CD4-positive, alpha-beta memory T cell (primary cell): ENCODE measurements at regions of chr15 and their contacts with region 1.

Region 1: GRCh38 chr15:100341662-100342560 is at the start of gene ADAMTS17:
- DNase-seq: peak; percentile 94 to 97 (median 95)
- H3K4me3 ChIP-seq: peak within 1 kb of the TSS in 1 of 2 donors; percentile 79
- H3K4me3 Mint-ChIP-seq: peak within 1 kb of the TSS; percentile 57 to 86 (median 75)
- H3K27ac ChIP-seq: peak within 1 kb of the TSS; percentile 43
- H3K27ac Mint-ChIP-seq: peak within 1 kb of the TSS; percentile 29 to 87 (median 77)
- H3K4me1 ChIP-seq: peaks cover 22% of the 10 kb centered on the region
- H3K4me1 Mint-ChIP-seq: peaks cover 13 to 34% (median 15%) of the 10 kb centered on the region in 4 donors
- H3K27me3 ChIP-seq: no peaks in the 10 kb centered on the region
- H3K27me3 Mint-ChIP-seq: no peaks in the 10 kb centered on the region
- total RNA-seq, gene ADAMTS17: 4.7 to 6.2 TPM

Region 2: DNA sequence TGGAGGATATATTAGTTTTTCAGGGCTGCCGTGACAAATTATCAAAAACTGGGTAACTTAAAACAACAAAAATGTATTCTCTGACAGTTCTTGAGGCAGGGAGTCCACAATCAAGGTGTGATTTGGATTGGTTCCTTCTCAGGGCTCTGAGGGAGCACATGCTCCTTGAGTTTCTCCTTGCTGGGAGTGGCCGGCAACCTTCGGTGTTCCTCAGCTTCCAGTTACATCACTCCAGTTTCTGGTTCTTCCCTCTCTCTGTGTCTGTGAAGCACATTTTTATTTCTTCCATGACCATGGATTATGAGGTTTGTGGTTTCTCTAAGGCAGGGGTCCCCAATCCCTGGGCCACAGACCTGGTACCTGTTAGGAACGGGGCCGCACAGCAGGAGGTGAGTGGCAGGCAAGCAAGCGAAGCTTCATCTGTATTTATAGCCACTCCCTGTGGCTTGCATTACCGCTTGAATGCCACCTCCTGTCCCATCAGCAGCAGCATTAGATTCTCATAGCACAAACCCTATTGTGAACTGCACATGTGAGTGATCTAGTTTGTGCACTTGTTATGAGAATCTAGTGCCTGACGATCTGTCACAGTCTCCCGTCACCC is 1066.3 kb before region 1 on chr15:
- CTCF ChIA-PET with region 1: interaction called, 5 read pairs
- POLR2A ChIA-PET with region 1: no interaction called
- intact Hi-C with region 1: loop called (anchors 1 kb)
- DNase-seq: no peak
- H3K4me3 ChIP-seq: no peak overlapping the region
- H3K4me3 Mint-ChIP-seq: no peak overlapping the region
- H3K27ac ChIP-seq: no peak overlapping the region
- H3K27ac Mint-ChIP-seq: no peak overlapping the region
- H3K4me1 ChIP-seq: no peaks in the 10 kb centered on the region
- H3K4me1 Mint-ChIP-seq: peaks cover 7 to 14% (median 13%) of the 10 kb centered on the region in 4 donors
- H3K27me3 ChIP-seq: no peaks in the 10 kb centered on the region
- H3K27me3 Mint-ChIP-seq: no peaks in the 10 kb centered on the region

Region 3: GRCh38 chr15:99733268-99734039 is 608.5 kb before region 1 on chr15 and contains the start of gene LYSMD4:
- CTCF ChIA-PET with region 1: no interaction called
- POLR2A ChIA-PET with region 1: interaction called, 3 read pairs
- intact Hi-C with region 1: loop called (anchors 10 kb)
- DNase-seq: peak; percentile 95 to 97 (median 96)
- H3K4me3 ChIP-seq: peak within 1 kb of the TSS; percentile 6 to 67
- H3K4me3 Mint-ChIP-seq: peak within 1 kb of the TSS; percentile 83 to 95 (median 87)
- H3K27ac ChIP-seq: peak within 1 kb of the TSS; percentile 46
- H3K27ac Mint-ChIP-seq: peak within 1 kb of the TSS; percentile 80 to 97 (median 88)
- H3K4me1 ChIP-seq: peaks cover 14% of the 10 kb centered on the region
- H3K4me1 Mint-ChIP-seq: peaks cover 12 to 24% (median 16%) of the 10 kb centered on the region in 4 donors
- H3K27me3 ChIP-seq: no peaks in the 10 kb centered on the region
- H3K27me3 Mint-ChIP-seq: no peaks in the 10 kb centered on the region
- total RNA-seq, gene LYSMD4: 18.0 to 19.0 TPM

Region 4: DNA sequence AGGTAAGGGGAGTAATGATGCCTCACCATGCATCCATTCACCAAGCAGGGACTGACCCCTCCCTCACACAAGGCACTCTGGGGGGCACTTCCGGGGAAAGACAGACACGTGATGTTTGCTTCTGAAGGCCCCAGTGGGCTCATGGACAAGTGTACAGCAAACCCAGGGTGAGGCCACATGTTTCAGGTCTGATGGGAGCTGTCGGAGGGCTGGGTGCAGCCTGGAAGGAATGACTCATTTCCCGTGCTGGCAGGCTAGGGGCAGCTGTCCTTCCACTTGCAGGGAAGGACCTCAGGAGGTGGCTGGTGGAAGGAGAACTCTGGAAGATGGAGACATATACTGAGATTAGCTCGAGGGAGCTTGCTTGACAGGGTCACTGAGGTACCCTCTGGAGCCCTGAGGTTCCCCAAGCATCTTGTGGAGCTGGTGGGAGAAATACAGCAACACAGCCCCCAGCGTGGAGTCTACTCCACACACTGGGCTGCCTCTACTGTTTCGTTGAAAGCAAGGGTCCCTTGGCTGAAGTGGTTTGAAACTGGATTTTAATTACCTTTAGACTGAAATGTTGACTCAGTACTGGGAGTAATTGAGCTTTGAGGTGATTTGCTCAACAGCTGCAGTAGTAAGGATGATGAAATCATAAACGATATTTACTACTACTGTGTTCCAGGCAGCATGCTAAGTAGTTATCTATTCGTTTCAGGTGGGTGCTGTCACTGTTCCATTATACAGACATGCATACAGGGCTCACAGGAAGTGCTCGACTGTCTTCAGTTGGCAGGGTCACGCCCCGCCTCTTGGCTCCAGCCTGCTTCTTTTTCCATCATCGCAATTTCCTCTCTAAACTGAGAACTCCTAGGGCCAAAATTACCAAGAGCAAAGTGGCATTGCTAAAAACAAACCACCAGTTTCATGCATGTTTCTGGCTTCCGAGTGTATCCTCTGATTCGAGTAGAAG is 230.5 kb before region 1 on chr15:
- CTCF ChIA-PET with region 1: interaction called, 10 read pairs
- POLR2A ChIA-PET with region 1: no interaction called
- intact Hi-C with region 1: no loop called
- DNase-seq: peak in 2 of 5 donors; percentile 7 to 11
- H3K4me3 ChIP-seq: no peak overlapping the region
- H3K4me3 Mint-ChIP-seq: peak overlapping the region; percentile 42 to 86 (median 72)
- H3K27ac ChIP-seq: peak overlapping the region; percentile 26
- H3K27ac Mint-ChIP-seq: peak overlapping the region; percentile 56 to 91 (median 88)
- H3K4me1 ChIP-seq: peaks cover 20% of the 10 kb centered on the region
- H3K4me1 Mint-ChIP-seq: peaks cover 8 to 41% (median 19%) of the 10 kb centered on the region in 4 donors
- H3K27me3 ChIP-seq: no peaks in the 10 kb centered on the region
- H3K27me3 Mint-ChIP-seq: no peaks in the 10 kb centered on the region

Region 5: DNA sequence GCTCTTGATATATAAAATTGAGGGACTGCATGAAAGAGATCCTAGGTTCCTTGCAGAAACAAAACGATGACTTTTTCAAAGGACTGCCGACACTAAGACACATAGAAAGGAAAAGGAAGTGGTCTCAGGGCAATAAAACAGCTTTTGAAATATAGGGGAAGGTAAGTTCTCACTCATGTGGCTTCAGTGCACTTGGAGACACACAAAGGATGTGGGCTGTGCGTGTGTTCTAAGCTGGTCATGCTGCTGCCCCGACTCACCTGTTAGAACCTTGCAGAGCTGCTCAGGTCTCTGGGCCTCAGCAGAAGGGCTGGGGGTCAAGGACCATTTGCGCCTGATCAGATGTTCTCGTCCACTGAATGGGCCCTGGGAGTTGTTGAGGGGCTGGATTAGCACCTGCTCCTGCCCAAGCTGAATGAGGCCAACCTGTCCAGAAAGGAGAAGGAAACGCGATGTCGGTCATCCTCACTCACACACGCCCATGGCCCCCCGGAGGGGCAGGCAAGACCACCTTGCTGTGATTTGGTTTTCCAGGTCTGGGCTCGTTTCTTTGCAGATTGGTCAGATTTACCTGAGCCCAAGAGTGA is 11.2 kb before region 1 on chr15:
- CTCF ChIA-PET with region 1: interaction called, 151 read pairs
- POLR2A ChIA-PET with region 1: interaction called, 32 read pairs
- intact Hi-C with region 1: loop called (anchors 1 kb)
- DNase-seq: peak; percentile 56 to 77 (median 69)
- H3K4me3 ChIP-seq: peak overlapping the region in 1 of 2 donors; percentile 27
- H3K4me3 Mint-ChIP-seq: peak overlapping the region; percentile 64 to 86 (median 72)
- H3K27ac ChIP-seq: peak overlapping the region; percentile 27
- H3K27ac Mint-ChIP-seq: peak overlapping the region; percentile 13 to 76 (median 64)
- H3K4me1 ChIP-seq: peaks cover 62% of the 10 kb centered on the region
- H3K4me1 Mint-ChIP-seq: peaks cover 40 to 80% (median 60%) of the 10 kb centered on the region in 4 donors
- H3K27me3 ChIP-seq: no peaks in the 10 kb centered on the region
- H3K27me3 Mint-ChIP-seq: no peaks in the 10 kb centered on the region

Region 6: GRCh38 chr15:100495861-100496260 is 153.9 kb after region 1 on chr15:
- CTCF ChIA-PET with region 1: no interaction called
- POLR2A ChIA-PET with region 1: no interaction called
- intact Hi-C with region 1: no loop called
- DNase-seq: no peak
- H3K4me3 ChIP-seq: no peak overlapping the region
- H3K4me3 Mint-ChIP-seq: no peak overlapping the region
- H3K27ac ChIP-seq: no peak overlapping the region
- H3K27ac Mint-ChIP-seq: no peak overlapping the region
- H3K4me1 ChIP-seq: no peaks in the 10 kb centered on the region
- H3K4me1 Mint-ChIP-seq: no peaks in the 10 kb centered on the region
- H3K27me3 ChIP-seq: no peaks in the 10 kb centered on the region
- H3K27me3 Mint-ChIP-seq: peaks cover 3 to 4% of the 10 kb centered on the region in 2 donors

Region 7: DNA sequence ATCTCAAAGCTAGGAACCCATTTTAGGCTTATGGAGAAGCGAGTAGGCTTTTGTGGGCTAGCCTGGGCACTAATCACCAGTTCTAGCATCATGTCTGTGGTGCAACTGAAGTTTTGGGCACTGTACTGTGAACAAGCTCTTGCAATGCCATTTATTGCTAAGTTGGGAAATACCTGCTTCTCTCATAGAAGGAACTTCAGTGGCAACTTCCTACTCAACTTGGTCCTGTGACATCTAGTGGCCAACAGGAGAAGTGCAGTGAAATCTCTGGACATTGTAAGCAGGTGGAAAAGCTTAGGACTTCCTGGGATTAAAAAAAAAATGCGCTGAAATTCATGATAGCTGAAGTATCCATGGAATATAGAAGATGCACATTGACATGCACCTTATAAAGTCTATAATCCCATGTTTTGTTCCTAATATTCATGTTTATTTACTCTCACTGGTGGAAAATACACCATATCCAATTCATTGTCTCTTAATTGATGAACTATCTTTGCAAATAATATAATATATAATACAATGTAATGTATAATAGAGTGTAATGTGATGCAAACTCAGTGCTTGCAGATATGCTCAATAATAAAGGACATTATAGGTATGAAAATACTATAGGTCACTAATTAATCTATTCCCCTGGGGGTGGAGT is 531.2 kb after region 1 on chr15:
- CTCF ChIA-PET with region 1: no interaction called
- POLR2A ChIA-PET with region 1: no interaction called
- intact Hi-C with region 1: loop called (anchors 1 kb)
- DNase-seq: peak; percentile 39 to 52 (median 51)
- H3K4me3 ChIP-seq: no peak overlapping the region
- H3K4me3 Mint-ChIP-seq: no peak overlapping the region
- H3K27ac ChIP-seq: no peak overlapping the region
- H3K27ac Mint-ChIP-seq: no peak overlapping the region
- H3K4me1 ChIP-seq: no peaks in the 10 kb centered on the region
- H3K4me1 Mint-ChIP-seq: peaks cover 0 to 1% (median under 1%) of the 10 kb centered on the region in 4 donors
- H3K27me3 ChIP-seq: no peaks in the 10 kb centered on the region
- H3K27me3 Mint-ChIP-seq: peaks cover 9 to 21% of the 10 kb centered on the region in 2 donors